ENCODE measurements at regions of chr9 and their contacts with region 1.

Region 1: GRCh38 chr9:76987594-76988200 is 31.8 kb upstream of the FOXB2 start:
- DNase-seq: no peak
- H3K4me3 ChIP-seq: no peak overlapping the region
- H3K27ac ChIP-seq: no peak overlapping the region
- H3K4me1 ChIP-seq: peaks cover 0 to 7% of the 10 kb centered on the region in 2 donors
- H3K27me3 ChIP-seq: no peaks in the 10 kb centered on the region
- CTCF ChIP-seq: peak; percentile 35 to 59 (median 41)

Region 2: GRCh38 chr9:76761448-76761847 is 226.2 kb before region 1 on chr9:
- intact Hi-C with region 1: loop called (anchors 2 kb)
- DNase-seq: no peak
- H3K4me3 ChIP-seq: no peak overlapping the region
- H3K27ac ChIP-seq: no peak overlapping the region
- H3K4me1 ChIP-seq: peaks cover 0 to 3% of the 10 kb centered on the region in 2 donors
- H3K27me3 ChIP-seq: no peaks in the 10 kb centered on the region
- CTCF ChIP-seq: peak in 2 of 3 experiments; percentile 21 to 40

Region 3: DNA sequence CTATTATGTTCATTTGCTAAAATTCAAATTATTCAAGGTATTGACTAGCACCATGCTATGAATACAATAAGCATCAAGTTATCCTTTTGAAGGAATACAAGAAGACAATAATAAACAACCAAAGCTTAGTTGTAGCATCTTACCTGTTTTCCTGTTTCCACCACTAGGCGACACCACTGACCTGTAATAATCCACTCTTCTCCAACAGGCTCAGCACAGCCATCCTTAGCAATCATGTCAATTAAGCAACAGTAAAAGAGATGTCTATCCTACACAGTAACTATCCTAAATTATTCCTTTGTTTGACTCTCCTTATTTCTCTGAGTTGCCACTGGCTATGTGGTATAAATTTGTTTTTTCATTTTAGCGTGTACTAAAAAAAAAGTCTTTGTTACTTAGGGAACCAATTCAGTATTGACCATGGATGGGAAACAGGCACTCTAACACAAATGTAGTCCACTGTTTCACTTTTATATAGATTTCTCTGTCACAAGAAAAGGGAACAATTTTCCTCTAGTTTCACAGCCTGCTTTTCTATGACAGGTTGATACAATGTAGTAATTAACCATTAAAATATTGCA is 177.2 kb before region 1 on chr9:
- intact Hi-C with region 1: loop called (anchors 1 kb)
- DNase-seq: no peak
- H3K4me3 ChIP-seq: no peak overlapping the region
- H3K27ac ChIP-seq: peak overlapping the region in 1 of 2 donors; percentile 5
- H3K4me1 ChIP-seq: peaks cover 0 to 13% of the 10 kb centered on the region in 2 donors
- H3K27me3 ChIP-seq: no peaks in the 10 kb centered on the region
- CTCF ChIP-seq: peak; percentile 60 to 68 (median 60)